Panc1 (cell line): ENCODE measurements at regions of chr13 and their contacts with region 1.

Region 1: DNA sequence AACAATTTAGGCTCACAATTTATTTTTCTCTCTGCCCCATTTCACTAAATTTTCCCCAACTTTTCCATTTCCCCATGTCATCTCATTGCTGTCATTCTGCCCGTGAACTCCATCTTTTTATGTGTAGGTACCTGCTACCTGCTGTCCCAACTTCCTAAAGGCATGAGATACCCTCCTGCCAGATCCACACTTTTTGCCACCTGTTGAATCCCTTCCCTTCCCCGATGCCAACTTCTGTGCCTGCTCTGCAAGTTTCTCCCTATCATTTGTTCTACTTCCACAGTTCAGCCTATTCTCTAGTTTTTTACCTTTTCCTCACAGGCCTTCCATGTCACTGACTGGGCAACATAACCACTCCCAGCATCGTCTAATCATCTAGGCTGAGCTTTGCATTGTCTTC is 607.5 kb upstream of the KLF12 start:
- DNase-seq: no peak
- ATAC-seq: no peak
- H3K4me3 ChIP-seq: no peak overlapping the region
- H3K27ac ChIP-seq: no peak overlapping the region
- H3K4me1 ChIP-seq: no peaks in the 10 kb centered on the region
- H3K27me3 ChIP-seq: no peaks in the 10 kb centered on the region
- CTCF ChIP-seq: no peak

Region 2: GRCh38 chr13:74870865-74871264 is 129.1 kb after region 1 on chr13:
- CTCF ChIA-PET with region 1: no interaction called
- POLR2A ChIA-PET with region 1: interaction called, 10 read pairs
- in situ Hi-C with region 1: no loop called
- intact Hi-C with region 1: no loop called
- DNase-seq: no peak
- ATAC-seq: no peak
- H3K4me3 ChIP-seq: no peak overlapping the region
- H3K27ac ChIP-seq: no peak overlapping the region
- H3K4me1 ChIP-seq: no peaks in the 10 kb centered on the region
- H3K27me3 ChIP-seq: no peaks in the 10 kb centered on the region
- CTCF ChIP-seq: no peak

Region 3: DNA sequence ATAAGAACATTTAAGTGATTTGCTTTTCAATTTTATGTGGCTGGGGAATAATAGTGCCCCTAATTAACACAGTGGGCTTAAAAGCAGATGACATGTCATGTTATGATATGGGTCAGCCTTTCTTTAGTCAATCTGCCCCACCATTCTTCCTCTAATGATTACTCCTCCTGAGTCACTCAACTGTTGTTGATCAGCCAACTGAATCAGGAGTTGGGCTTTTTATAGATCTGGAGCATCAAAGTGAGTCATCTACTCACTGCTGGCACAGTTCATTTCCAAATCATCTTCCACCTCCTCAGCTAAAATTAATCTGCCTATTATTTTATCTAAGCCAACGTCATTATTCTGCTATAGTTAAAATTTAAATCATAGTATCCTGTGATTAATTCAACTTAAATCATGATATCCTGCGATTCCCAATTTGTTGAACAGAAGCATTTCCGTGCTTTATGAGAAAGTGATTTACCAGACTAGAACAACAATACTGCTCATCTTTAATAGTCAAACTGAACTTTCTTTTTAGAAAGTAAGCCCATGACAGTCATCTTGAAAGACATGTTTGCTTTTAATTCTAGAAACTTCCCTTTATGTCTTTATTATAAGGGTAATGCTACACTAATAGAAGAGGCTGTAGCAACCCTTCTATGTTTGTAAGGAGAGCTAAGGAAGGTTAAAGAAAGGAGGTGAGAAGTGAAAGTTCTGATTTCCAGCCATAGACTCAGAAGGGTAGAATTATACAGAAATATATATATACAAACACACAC is 188.9 kb after region 1 on chr13:
- CTCF ChIA-PET with region 1: no interaction called
- POLR2A ChIA-PET with region 1: no interaction called
- in situ Hi-C with region 1: no loop called
- intact Hi-C with region 1: no loop called
- DNase-seq: no peak
- ATAC-seq: no peak
- H3K4me3 ChIP-seq: no peak overlapping the region
- H3K27ac ChIP-seq: no peak overlapping the region
- H3K4me1 ChIP-seq: no peaks in the 10 kb centered on the region
- H3K27me3 ChIP-seq: no peaks in the 10 kb centered on the region
- CTCF ChIP-seq: no peak